Thyroid gland (tissue), 4 donors: ENCODE measurements at regions of chr7 and their contacts with region 1.

Region 1: DNA sequence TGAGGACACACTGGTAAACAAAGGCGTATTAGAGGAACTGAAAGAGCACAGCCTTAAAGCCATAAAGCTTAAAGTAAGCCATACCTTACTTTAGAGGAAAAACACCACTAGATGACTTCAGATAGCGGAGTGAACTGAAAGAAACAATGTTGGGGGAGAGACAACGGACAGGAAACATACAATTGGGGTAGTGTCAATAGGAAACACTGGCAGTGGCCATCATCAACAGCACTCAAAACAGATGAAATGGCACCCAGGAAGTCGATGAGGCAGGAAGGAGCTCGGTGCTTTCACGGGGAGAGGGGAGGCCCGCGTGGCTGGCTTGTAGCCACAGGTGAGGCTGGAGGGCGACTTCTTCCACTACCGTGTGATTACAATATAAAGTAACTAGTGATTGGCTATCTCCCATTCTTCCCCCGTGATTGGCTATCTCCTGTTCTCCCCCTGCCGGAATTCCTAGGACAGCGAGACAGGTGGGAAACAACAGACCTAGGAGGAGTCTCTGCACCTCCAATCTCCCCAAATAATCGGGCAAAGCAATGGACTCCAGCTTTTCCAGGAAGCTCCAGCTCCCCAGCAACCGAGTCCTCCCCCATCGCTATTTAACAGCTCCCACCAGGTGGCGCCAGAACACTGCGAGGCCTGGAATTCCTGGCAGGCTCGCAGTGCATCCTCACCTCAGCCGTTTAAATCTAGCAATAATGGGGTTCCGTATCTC is 2.4 kb upstream of the TAS2R38 start:
- DNase-seq: peak; percentile 69 to 80
- H3K4me3 ChIP-seq: no peak overlapping the region
- H3K27ac ChIP-seq: no peak overlapping the region
- H3K4me1 ChIP-seq: peaks cover 0 to 4% of the 10 kb centered on the region in 2 donors
- H3K27me3 ChIP-seq: no peaks in the 10 kb centered on the region
- CTCF ChIP-seq: peak; percentile 37 to 90 (median 70)
- POLR2A ChIP-seq: no peak

Region 2: DNA sequence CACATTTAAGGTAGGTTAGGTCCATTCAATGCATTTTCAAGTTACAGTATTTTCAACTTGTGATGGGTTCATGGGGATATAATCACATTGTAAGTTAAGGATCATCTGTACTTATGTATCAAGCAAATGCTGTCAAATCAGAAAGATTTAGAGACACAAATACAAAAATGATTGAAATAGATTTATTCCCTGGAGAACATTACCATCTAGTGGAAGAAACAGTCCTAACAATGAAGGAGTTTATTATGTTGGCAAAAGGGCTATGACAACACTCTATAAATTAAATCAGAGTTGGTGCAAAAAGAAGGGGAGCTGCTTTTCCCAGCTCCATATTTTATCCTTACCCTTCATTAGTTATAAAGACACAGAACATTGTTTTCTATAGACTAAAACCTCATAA is 212.9 kb after region 1 on chr7:
- intact Hi-C with region 1: loop called (anchors 5 kb)
- DNase-seq: no peak
- H3K4me3 ChIP-seq: no peak overlapping the region
- H3K27ac ChIP-seq: no peak overlapping the region
- H3K4me1 ChIP-seq: no peaks in the 10 kb centered on the region
- H3K27me3 ChIP-seq: no peaks in the 10 kb centered on the region
- CTCF ChIP-seq: peak in 4 of 6 experiments; percentile 8 to 42 (median 38)
- POLR2A ChIP-seq: no peak